ENCODE measurements at regions of chr22 and their contacts with region 1.

Region 1: DNA sequence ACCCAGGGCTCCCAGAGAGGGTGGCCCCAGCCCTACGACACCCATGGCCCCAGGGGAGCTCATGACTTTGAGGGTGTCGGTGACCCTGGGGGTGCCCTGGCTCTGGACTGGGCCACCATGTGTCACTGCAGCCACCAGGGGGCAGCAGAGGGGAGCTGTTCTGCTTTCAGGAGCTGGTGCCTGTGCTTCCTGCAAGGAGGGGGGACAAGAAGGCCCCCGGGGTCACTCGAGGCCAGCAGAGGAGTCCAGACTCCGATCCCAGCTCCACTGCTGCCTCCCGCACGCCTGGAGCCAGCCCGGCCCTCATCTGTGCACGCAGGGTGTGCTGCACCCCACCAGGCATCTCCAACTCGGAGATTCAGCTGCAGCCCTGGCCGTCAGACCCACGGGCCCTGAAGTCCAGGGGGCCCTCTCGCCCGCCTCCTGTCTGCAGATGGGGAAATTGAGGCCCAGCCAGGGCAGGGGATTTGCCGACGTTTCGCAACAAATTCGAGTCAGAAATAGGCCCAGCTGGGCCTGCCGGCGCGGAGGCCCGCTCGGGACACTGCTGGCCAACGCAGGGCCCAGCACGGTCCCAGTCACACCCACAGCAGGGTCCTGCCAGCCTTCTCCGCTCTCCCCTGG is 29.5 kb upstream of the WNT7B start:
- DNase-seq: peak; percentile 89

Region 2: DNA sequence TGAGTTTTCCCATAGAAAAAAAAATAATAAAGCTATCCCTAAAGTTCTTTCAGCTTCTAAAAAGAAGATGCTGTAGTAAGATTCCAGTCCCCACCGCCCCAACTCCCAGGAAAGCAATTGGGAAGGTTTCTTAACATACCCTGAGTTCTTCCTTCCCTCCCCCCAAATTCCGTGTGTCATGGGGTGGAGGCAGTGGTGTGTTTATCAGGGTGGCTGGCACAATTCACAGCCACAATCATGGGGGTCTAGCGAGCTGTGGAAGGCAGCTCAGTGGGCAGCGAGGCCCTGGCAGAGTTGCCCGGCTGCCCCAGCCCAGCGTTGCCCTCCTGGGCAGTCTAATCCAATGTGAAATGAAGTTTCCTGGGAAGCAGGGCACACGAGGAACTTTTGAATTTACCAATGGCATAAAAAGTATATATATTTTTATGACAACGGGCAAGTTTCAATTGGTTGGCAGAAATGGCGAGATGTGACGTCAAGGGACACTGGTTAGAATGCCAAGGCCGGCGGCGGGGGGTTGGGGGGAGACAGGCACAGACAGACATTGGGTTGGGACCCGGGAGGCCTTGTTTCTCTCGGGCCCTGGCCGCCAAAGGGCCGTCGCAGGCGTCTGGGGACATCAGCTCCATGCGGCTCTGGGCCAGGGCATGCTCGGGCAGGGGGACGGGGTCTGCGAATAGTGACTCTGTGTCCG is 63.2 kb after region 1 on chr22:
- in situ Hi-C with region 1: loop called (anchors 10 kb)
- DNase-seq: no peak

Region 3: DNA sequence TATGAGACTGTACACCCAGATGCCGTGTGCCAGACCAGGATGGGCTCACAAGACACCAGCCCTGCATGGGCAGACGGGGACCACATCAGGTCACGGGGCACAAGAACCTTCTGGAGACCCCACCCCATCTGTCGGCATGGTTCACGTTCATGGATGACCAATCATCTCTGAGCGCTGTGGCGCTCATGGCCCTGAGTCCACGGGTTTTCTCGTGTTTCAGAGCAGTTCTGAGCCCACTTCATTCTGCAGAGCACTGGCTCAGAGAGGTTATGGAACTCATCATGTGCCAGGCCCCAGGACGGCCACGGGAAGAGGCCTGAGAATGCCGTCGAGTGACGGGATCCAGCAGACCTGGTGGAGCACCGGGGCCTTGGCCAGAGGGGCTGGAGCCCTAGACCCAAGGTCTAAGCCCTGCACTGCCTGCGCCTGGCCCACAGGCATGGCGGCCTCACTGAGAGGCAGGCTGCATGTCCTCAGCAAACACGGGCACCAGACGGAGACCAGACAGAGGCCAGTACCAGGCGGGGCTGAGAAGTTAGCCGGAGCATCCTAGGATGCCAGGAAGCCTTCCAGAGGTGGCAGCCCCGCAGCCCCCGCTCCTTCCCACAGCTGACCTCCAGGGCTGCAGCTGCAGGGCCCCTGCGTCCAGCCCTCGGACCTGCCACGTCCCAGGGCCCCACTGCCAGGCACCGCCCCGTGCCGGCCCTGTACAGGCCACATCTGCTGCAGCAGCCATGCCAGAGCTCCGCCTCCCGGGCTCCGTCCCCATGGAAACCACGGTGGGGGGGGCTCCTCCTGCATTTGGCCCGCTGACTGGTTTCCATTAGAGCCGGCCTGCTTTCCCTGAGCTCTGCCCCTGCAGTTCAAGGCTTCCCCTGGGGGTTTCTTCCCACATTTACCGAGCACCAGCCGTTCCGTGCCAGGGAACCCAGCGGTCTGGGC is 81.1 kb after region 1 on chr22:
- in situ Hi-C with region 1: no loop called
- DNase-seq: peak; percentile 76

Region 4: DNA sequence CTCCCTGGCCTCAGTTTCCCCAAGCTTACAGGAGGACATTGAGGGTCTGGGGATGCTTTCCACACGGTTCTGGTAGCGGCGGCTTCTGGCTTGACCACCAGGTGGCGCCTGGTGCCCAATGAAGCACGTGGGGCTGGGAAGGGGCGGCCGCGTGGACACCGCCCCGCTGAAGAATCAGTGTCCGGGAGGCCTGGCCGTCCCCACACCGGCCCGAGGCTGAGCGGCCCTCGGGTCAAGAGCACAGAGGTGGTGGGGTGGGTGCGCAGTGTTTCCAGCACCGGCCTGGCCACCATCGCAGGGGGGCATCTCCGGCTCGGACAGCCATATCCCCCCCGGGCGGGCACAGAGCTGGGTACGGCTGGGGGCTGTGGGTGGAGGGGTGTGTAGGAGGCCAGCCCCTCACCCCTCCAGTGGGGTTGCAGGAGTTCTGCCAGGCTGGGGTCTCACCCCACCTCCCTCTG is 116.0 kb after region 1 on chr22:
- in situ Hi-C with region 1: loop called (anchors 10 kb)
- DNase-seq: no peak

Measured in G401 (cell line).